ENCODE measurements at regions of chr15 and their contacts with region 1.

Region 1: GRCh38 chr15:63277038-63277892 is at the start of gene APH1B:
- DNase-seq: peak; percentile 64 to 90 (median 78)
- ATAC-seq: peak; percentile 84 to 87
- H3K4me3 Mint-ChIP-seq: peak within 1 kb of the TSS; percentile 82 to 94 (median 92)
- H3K27ac Mint-ChIP-seq: peak within 1 kb of the TSS; percentile 76 to 95 (median 90)
- H3K4me1 Mint-ChIP-seq: peaks cover 9 to 50% (median 37%) of the 10 kb centered on the region in 4 donors
- H3K27me3 Mint-ChIP-seq: no peaks in the 10 kb centered on the region
- polyA plus RNA-seq, gene APH1B: 8.3 to 14.3 (median 11.1) TPM

Region 2: GRCh38 chr15:63157118-63157843 is 120.0 kb before region 1 on chr15 and contains the start of gene RPS27L:
- POLR2A ChIA-PET with region 1: interaction called, 20 read pairs
- DNase-seq: peak; percentile 75 to 93 (median 84)
- ATAC-seq: peak; percentile 97
- H3K4me3 Mint-ChIP-seq: peak within 1 kb of the TSS; percentile 97 to 100 (median 99)
- H3K27ac Mint-ChIP-seq: peak within 1 kb of the TSS; percentile 94 to 99 (median 98)
- H3K4me1 Mint-ChIP-seq: peaks cover 3 to 30% (median 20%) of the 10 kb centered on the region in 4 donors
- H3K27me3 Mint-ChIP-seq: no peaks in the 10 kb centered on the region
- polyA plus RNA-seq, gene RPS27L: 143 to 221 (median 206) TPM

Region 3: GRCh38 chr15:63195569-63196015 is 81.7 kb before region 1 on chr15:
- POLR2A ChIA-PET with region 1: interaction called, 36 read pairs
- DNase-seq: no peak
- ATAC-seq: no peak
- H3K4me3 Mint-ChIP-seq: peak overlapping the region; percentile 50 to 84 (median 72)
- H3K27ac Mint-ChIP-seq: peak overlapping the region; percentile 86 to 98 (median 93)
- H3K4me1 Mint-ChIP-seq: peaks cover 47 to 96% (median 91%) of the 10 kb centered on the region in 4 donors
- H3K27me3 Mint-ChIP-seq: no peaks in the 10 kb centered on the region